ENCODE measurements at regions of chr1 and their contacts with region 1.

Region 1: GRCh38 chr1:75188892-75189291 is 54.7 kb downstream of the LHX8 start:
- DNase-seq: no peak
- H3K4me3 ChIP-seq: no peak overlapping the region
- CTCF ChIP-seq: no peak

Region 2: DNA sequence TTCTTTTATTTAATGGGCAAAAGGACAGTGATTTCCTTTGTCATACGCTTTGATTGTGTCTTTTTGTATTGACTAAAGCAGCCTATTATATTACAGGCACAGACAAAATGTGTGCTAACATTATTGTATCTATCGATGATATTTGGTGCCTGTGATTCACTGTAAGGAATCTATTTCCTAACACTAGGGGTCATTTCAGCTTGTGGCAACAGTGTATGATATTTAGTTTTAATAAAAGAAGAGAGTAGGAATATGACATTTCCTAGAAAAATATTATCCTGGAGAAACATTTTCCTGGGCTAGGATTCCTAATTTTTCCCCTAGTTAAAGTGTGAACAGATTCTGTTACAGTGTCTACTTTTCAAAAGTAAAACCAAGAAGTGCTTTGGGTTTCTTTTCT is 413.2 kb before region 1 on chr1:
- in situ Hi-C with region 1: loop called (anchors 25 kb)
- DNase-seq: no peak
- H3K4me3 ChIP-seq: no peak overlapping the region
- CTCF ChIP-seq: no peak

Measured in astrocyte of the spinal cord (primary cell).